ENCODE measurements at regions of chr4 and their contacts with region 1.

Region 1: GRCh38 chr4:79403356-79403755 is 4.7 kb downstream of the GK2 start:
- DNase-seq: no peak
- ATAC-seq: no peak
- H3K4me3 ChIP-seq: no peak overlapping the region
- H3K27ac ChIP-seq: no peak overlapping the region
- H3K4me1 ChIP-seq: no peaks in the 10 kb centered on the region
- H3K27me3 ChIP-seq: no peaks in the 10 kb centered on the region
- CTCF ChIP-seq: no peak
- POLR2A ChIP-seq: no peak

Region 2: GRCh38 chr4:79381161-79381560 is 22.2 kb before region 1 on chr4:
- in situ Hi-C with region 1: no loop called
- intact Hi-C with region 1: loop called (anchors 1 kb)
- DNase-seq: no peak
- ATAC-seq: no peak
- H3K4me3 ChIP-seq: no peak overlapping the region
- H3K27ac ChIP-seq: no peak overlapping the region
- H3K4me1 ChIP-seq: no peaks in the 10 kb centered on the region
- H3K27me3 ChIP-seq: no peaks in the 10 kb centered on the region
- CTCF ChIP-seq: no peak
- POLR2A ChIP-seq: no peak

Measured in gastrocnemius medialis (tissue), 4 donors.